Right ventricle myocardium inferior (tissue), 1 donor: ENCODE measurements at regions of chr7 and their contacts with region 1.

Region 1: GRCh38 chr7:80584778-80585177 is 53.7 kb upstream of the CD36 start:
- DNase-seq: no peak
- ATAC-seq: peak; percentile 34

Region 2: GRCh38 chr7:80428161-80429054 is 156.4 kb before region 1 on chr7:
- intact Hi-C with region 1: loop called (anchors 5 kb)
- DNase-seq: no peak
- ATAC-seq: peak; percentile 81

Region 3: DNA sequence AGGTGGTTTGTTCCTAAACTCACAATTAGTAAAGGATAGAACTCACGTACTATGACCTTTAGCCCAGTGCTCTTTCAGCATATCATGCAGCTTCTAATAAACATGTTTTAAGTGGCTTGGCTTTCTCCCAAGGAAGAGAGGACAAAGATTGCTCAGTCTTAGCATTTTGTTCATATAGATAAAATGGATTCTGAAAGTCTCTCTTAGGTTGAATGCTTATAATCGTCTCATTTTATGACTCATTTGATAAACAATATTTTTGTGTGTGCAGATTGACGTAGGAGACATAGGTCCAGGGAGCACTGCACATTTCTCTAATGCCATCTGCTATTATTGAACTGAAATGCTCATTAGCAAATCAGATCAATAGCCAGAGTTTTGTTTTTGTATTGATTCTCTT is 117.7 kb before region 1 on chr7:
- intact Hi-C with region 1: loop called (anchors 5 kb)
- DNase-seq: no peak
- ATAC-seq: peak; percentile 80

Region 4: GRCh38 chr7:80488406-80488805 is 96.4 kb before region 1 on chr7:
- intact Hi-C with region 1: no loop called
- DNase-seq: no peak
- ATAC-seq: no peak

Region 5: DNA sequence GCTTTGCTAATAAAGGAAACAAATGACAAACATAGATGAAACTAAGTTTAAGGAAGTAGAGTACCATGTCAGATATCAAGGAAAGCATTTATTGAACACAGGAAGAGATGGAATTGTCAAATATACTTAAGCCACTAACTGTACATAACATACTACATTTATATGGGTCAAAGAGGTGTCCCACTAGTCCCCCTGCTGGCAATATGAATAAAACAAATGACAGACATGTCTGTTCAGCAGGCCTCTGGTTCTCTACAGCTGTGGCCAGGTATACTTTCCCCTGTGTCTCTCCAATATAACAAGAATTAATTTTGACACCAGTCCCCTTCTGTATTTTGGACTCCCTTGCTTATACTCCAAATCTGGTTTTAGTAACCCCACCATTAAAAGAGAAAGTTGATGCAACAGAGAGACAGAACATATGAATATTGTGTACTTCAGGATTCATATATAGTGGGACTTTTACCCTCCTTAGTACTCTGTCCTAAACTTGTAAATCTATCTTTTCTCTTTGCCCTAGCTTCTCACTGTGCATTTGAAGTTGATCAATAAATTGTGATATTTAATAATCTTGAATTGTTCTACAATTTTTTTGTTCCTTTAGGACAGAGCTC is 96.6 kb after region 1 on chr7:
- intact Hi-C with region 1: no loop called
- DNase-seq: no peak
- ATAC-seq: peak; percentile 57

Region 6: DNA sequence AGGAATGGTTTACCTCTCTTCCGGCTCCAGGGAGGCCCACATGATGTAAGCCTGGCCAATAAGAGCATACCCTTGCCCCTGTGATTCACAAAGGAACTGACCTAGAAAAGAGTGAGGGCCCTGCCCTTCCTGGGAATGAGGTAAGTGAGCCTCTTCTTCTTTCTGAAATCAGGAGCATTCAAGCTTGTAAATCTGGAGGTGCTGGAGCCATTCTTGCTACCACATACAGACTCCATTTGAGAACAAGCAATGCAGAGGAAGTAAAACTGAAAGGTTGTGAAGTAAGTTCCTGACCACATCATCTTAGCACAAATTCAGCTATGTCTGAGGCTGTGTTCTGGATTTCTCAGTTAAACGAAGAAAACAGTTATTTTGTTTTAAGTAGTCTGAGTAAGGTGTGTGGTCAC is 185.9 kb after region 1 on chr7:
- intact Hi-C with region 1: loop called (anchors 10 kb)
- DNase-seq: no peak
- ATAC-seq: no peak